AG04450 (cell line): ENCODE measurements at regions of chr10 and their contacts with region 1.

Region 1: DNA sequence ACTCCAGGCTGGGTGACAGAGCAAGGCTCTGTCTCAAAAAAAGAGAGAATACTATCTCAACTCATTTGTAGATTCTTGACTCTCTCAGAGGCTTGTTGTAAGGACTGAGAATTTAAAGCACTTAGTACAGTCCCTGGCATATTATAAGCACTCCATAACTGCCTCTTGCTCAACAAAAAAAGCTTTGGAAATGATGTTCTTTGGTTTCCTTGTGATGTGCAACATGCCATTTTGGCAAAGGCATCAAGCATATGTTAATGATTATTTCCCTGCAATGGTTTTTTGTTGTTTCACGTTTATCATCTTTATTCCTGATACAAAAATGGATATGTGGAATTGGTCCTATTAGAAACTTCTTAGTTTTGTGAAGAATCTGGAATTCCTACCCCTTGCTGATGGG is 15.7 kb downstream of the NOLC1 start:
- DNase-seq: no peak
- H3K4me3 ChIP-seq: no peak overlapping the region
- H3K27ac ChIP-seq: no peak overlapping the region
- H3K27me3 ChIP-seq: no peaks in the 10 kb centered on the region
- CTCF ChIP-seq: no peak

Region 2: GRCh38 chr10:101938316-101939281 is 229.3 kb before region 1 on chr10:
- CTCF ChIA-PET with region 1: no interaction called
- POLR2A ChIA-PET with region 1: no interaction called
- DNase-seq: peak; percentile 82
- H3K4me3 ChIP-seq: peak overlapping the region; percentile 21
- H3K27ac ChIP-seq: peak overlapping the region; percentile 96
- H3K27me3 ChIP-seq: no peaks in the 10 kb centered on the region
- CTCF ChIP-seq: no peak

Region 3: GRCh38 chr10:102090772-102091171 is 77.1 kb before region 1 on chr10:
- CTCF ChIA-PET with region 1: no interaction called
- POLR2A ChIA-PET with region 1: no interaction called
- DNase-seq: no peak
- H3K4me3 ChIP-seq: no peak overlapping the region
- H3K27ac ChIP-seq: no peak overlapping the region
- H3K27me3 ChIP-seq: no peaks in the 10 kb centered on the region
- CTCF ChIP-seq: no peak

Region 4: DNA sequence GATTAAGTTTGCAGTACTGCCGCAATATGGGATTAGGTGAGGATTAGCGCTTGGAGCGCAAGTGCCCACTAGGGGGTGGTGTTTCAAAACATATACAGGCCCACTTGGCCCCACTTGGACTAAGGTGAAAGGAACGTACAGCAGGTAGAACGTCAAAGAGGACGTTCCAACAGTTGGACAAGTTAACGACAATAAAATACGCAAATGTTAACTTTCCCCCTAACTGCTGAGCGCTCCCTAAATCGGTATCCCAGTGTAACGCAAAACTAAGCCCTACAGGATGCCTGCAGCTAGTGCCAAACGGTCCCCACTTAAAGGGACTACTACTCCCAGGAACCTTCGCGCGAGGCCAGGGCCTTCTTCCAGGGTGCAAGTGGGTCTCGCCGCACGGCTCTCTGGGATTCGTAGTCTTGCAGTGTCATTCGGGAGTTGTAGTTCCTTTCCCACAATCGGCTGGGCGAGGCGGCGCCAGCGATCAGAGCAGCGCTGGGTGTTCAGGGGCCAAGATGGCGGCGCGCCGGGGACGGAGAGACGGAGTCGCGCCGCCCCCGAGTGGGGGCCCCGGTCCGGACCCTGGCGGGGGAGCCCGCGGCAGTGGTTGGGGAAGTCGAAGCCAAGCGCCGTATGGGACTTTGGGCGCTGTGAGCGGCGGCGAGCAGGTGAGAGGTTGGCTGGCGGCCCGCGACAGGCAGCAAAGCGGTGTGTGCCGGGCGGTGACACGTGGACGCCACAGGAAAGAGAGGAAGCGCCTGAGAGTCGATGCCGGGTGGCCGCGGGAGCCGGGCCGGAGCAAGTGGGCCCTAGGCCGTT is 35.1 kb before region 1 on chr10 and contains the start of gene PPRC1:
- CTCF ChIA-PET with region 1: interaction called, 10 read pairs
- POLR2A ChIA-PET with region 1: no interaction called
- DNase-seq: peak; percentile 97
- H3K4me3 ChIP-seq: peak within 1 kb of the TSS; percentile 96
- H3K27ac ChIP-seq: peak within 1 kb of the TSS; percentile 93
- H3K27me3 ChIP-seq: no peaks in the 10 kb centered on the region
- CTCF ChIP-seq: peak; percentile 95
- polyA plus RNA-seq, gene PPRC1: 14.1 and 18.5 TPM in 2 replicates

Region 5: GRCh38 chr10:102185811-102186527 is 18.1 kb after region 1 on chr10:
- CTCF ChIA-PET with region 1: interaction called, 23 read pairs
- POLR2A ChIA-PET with region 1: no interaction called
- DNase-seq: no peak
- H3K4me3 ChIP-seq: no peak overlapping the region
- H3K27ac ChIP-seq: no peak overlapping the region
- H3K27me3 ChIP-seq: peaks cover 11% of the 10 kb centered on the region
- CTCF ChIP-seq: no peak

Region 6: DNA sequence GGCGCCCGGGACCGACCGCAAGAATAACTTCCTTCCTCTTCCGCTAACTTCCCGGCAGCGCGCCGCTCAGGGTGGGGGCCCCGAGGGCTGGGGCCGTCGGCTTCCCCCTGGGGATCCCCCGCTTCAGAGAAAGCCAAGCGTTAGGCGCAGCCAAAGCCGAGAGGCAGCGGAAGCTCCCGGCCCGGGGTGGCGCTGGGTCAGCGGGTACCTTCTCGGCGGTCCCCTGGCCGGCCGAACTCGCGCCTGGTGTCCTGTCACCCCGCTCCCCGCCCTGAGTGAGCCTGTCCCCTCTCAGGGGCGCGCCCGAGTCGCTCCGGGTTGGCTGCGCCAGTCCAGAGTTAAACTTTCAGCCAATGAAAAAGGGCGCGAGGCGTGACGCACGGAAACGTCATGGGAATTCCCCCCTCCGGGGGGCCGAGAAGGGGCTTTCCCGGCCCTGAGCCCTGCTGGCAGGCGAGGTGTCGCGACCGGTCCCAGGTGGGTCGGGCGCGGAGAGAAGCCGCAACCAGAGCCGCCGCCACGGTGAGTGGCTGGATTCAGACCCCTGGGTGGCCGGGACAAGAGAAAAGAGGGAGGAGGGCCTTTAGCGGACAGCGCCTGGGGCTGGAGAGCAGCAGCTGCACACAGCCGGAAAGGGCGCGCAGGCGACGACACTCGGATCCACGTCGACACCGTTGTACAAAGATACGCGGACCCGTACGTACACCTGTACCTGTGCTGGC is 226.4 kb after region 1 on chr10:
- CTCF ChIA-PET with region 1: interaction called, 31 read pairs
- POLR2A ChIA-PET with region 1: no interaction called
- DNase-seq: peak; percentile 82
- H3K4me3 ChIP-seq: peak overlapping the region; percentile 82
- H3K27ac ChIP-seq: peak overlapping the region; percentile 99
- H3K27me3 ChIP-seq: peaks cover 3% of the 10 kb centered on the region
- CTCF ChIP-seq: no peak

Region 7: DNA sequence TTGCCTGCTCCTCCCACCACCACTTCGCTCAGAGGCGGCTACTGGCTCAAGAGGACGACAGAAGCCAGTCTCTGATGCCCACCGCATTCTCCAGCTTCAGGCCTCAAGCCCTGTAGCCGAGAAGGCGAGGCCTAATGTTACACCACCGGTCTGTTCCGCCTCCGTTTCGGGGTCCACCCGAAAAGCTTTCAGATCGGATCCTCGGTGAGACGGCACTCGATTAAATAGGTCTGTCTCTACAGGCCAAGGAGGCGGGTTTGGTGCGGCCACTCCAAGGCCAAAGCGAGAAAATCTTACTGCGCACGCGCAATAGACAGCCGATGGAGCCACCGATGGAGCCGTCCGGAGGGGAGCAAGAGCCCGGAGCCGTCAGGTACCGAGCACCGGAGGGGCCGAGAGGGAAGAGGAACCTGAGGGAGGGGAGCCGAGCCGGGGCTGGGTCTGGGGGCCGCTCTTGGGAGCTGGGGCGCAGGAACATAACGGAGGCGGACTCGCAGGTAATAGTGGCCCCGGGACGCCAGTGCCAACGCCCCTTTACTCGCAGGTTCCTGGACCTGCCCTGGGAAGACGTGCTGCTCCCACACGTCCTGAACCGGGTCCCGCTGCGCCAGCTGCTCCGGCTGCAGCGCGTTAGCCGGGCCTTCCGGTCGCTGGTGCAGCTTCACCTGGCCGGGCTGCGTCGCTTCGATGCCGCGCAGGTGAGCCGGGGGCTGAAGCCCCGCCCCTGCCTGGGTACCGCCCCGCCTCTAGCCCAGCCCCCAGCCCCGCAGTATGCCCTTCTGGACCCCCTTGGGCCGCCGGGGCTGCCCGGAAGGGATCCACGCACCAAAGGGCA is 253.2 kb after region 1 on chr10 and contains the start of gene FBXL15:
- CTCF ChIA-PET with region 1: interaction called, 14 read pairs
- POLR2A ChIA-PET with region 1: interaction called, 6 read pairs
- DNase-seq: peak; percentile 92
- H3K4me3 ChIP-seq: peak within 1 kb of the TSS; percentile 92
- H3K27ac ChIP-seq: peak within 1 kb of the TSS; percentile 84
- H3K27me3 ChIP-seq: peaks cover 21% of the 10 kb centered on the region
- CTCF ChIP-seq: no peak
- polyA plus RNA-seq, gene FBXL15: 2.7 and 4.3 TPM in 2 replicates